Activated CD4-positive, alpha-beta T cell treated with anti-CD3 and anti-CD28 coated beads, Interleukin-2, amount 10 ng/mL, durations not matched to agents 7 days and 5 days (primary cell): ENCODE measurements at regions of chr7 and their contacts with region 1.

Region 1: DNA sequence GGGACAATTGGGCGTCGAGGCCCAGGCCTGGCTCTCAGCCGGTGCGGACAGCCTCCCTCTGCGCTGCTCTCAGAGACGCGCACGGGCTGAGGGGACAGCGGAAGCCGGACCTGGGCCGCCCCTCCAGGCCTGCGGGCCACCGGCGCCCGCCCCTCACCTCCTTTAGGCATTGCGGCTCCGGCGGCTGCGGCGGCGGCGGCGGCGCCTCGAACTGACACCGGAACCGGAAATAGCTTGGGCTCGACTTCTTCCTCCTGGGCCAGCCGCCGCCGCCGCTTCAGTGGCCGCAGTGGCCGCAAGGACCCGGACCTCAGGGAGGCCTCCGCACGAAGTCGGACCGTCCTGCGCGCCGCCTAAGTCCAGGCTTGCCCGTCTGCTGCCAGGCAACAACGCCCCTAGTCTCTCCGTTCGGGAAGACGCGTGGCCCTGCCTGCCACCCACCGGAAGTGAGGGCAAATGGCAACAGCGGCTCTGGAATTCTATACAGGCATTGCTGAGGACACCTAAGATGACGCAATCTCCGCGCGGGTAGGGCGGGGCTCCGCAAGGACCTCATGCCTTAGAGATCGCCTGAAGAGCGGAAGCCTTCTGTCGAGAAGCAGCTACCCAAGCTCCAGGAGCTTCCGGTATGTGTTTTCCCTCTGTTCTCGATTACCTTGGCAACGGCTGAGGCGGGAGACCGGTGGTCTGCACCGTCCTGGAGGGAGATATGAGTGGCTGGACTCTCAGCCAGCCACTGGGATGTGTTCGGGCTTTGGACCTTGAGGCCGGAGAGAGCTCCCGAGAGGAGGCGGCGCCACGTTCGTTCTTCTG is at the starts of genes BUD31 and PDAP1:
- DNase-seq: peak; percentile 94
- H3K4me3 Mint-ChIP-seq: peak within 1 kb of the TSS; percentile 94
- H3K27ac Mint-ChIP-seq: peak within 1 kb of the TSS; percentile 92
- H3K4me1 Mint-ChIP-seq: peaks cover 50% of the 10 kb centered on the region
- H3K27me3 Mint-ChIP-seq: no peaks in the 10 kb centered on the region
- total RNA-seq, gene BUD31: 94.2 to 115 TPM
- total RNA-seq, gene PDAP1: 81.4 to 81.9 TPM

Region 2: DNA sequence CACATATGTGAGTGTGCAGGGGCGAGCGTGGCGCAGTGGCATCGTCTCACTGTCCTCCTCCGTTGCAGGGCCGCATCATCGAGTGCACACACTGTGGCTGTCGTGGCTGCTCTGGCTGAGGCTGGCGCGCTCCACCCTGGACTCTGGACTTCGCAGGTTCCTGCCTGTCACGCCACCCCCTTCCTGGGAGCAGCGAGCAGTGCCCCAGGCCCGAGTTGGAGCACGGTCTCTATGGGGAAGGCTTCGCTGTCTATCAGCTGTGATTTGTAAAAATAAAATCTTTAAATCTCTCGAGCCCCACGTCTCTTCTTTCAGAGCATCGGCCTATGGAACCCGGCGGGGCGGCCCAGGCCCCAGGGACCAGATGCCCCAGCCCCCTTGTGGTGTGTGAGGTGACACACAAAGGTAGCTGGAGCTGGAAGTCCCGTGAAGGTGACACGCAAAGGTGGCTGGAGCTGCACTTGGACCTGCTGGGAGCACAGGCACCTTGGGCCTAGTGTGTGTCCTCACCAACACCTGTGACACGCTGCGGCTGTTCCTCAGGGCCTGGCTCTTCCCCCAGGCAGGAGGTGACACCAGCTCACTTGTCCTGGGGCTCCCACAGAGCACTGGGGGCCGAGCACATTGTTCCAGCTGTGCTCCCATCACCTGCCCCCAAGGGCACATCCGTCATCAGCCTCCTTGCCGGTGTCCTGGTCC is 10.9 kb after region 1 on chr7:
- CTCF ChIA-PET with region 1: interaction called, 18 read pairs
- POLR2A ChIA-PET with region 1: no interaction called
- DNase-seq: no peak
- H3K4me3 Mint-ChIP-seq: no peak overlapping the region
- H3K27ac Mint-ChIP-seq: no peak overlapping the region
- H3K4me1 Mint-ChIP-seq: peaks cover 3% of the 10 kb centered on the region
- H3K27me3 Mint-ChIP-seq: no peaks in the 10 kb centered on the region